GM12878 (cell line): ENCODE measurements at regions of chr5 and their contacts with region 1.

Region 1: DNA sequence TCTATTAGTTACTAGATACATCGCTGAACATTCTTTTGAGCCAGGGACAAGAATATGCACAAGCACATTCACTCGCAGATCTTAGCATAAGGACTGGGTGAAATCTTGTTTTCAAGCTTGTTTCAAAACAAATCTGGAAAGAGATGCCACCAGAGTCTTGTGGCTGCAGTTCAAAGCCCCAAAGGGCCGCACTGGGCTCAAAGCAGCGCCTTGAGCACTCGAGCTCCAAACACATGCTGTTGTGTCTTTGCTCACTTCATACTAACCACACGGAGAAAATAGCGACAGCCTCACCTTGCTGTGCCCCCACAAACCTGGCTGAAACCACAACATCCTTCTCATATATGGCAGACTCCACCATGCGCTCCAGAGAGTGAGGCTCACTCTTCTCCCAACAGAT is 34.2 kb upstream of the IL7R start:
- DNase-seq: no peak
- ATAC-seq: no peak; the same call in 2 of the 3 replicates
- H3K4me3 ChIP-seq: no peak overlapping the region
- H3K27ac ChIP-seq: no peak overlapping the region
- H3K4me1 ChIP-seq: no peaks in the 10 kb centered on the region
- H3K27me3 ChIP-seq: no peaks in the 10 kb centered on the region
- CTCF ChIP-seq: no peak
- EP300 ChIP-seq: no peak
- POLR2A ChIP-seq: no peak
- RAD21 ChIP-seq: no peak

Region 2: GRCh38 chr5:34957857-34958690 is 864.4 kb before region 1 on chr5:
- CTCF ChIA-PET with region 1: no interaction called
- POLR2A ChIA-PET with region 1: no interaction called
- RAD21 ChIA-PET with region 1: no interaction called
- SMC1A ChIA-PET with region 1: no interaction called
- in situ Hi-C with region 1: no loop called
- intact Hi-C with region 1: no loop called
- DNase-seq: no peak
- ATAC-seq: peak; percentile 90
- H3K4me3 ChIP-seq: no peak overlapping the region
- H3K27ac ChIP-seq: no peak overlapping the region
- H3K4me1 ChIP-seq: peaks cover 11% of the 10 kb centered on the region; the same call in 1 of the 2 replicates
- H3K27me3 ChIP-seq: no peaks in the 10 kb centered on the region
- CTCF ChIP-seq: peak; percentile 59 to 72 (median 70)
- EP300 ChIP-seq: no peak
- POLR2A ChIP-seq: no peak
- RAD21 ChIP-seq: peak; percentile 49

Region 3: GRCh38 chr5:35811108-35811741 is 11.3 kb before region 1 on chr5:
- CTCF ChIA-PET with region 1: interaction called, 17 read pairs
- POLR2A ChIA-PET with region 1: no interaction called
- RAD21 ChIA-PET with region 1: interaction called, 5 read pairs
- SMC1A ChIA-PET with region 1: interaction called, 8 read pairs
- in situ Hi-C with region 1: no loop called
- intact Hi-C with region 1: no loop called
- DNase-seq: no peak
- ATAC-seq: peak; percentile 49
- H3K4me3 ChIP-seq: no peak overlapping the region
- H3K27ac ChIP-seq: no peak overlapping the region
- H3K4me1 ChIP-seq: no peaks in the 10 kb centered on the region
- H3K27me3 ChIP-seq: no peaks in the 10 kb centered on the region
- CTCF ChIP-seq: no peak
- EP300 ChIP-seq: no peak
- POLR2A ChIP-seq: no peak
- RAD21 ChIP-seq: no peak

Region 4: DNA sequence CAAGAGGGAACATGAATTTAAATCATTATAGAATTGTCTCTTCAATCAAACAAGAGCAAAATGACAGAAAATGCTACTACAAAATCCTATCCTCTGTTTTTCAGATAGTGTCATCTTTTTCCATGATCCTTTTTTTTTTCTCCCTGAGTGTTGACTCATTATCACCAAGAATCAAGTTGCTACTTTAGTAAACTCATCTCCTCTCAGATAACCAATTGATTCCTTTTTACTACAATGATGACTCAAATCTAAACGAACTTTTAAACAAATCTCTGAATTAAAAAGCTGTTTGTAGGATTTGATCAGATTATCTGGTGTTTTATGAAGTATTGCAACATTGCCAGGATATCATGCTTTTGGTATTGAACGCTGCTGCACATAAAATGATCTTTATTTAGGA is 10.3 kb after region 1 on chr5:
- CTCF ChIA-PET with region 1: interaction called, 12 read pairs
- POLR2A ChIA-PET with region 1: interaction called, 7 read pairs
- RAD21 ChIA-PET with region 1: interaction called, 3 read pairs
- SMC1A ChIA-PET with region 1: interaction called, 6 read pairs
- in situ Hi-C with region 1: no loop called
- intact Hi-C with region 1: no loop called
- DNase-seq: no peak
- ATAC-seq: no peak
- H3K4me3 ChIP-seq: no peak overlapping the region
- H3K27ac ChIP-seq: no peak overlapping the region
- H3K4me1 ChIP-seq: peaks cover 5% of the 10 kb centered on the region; the same call in 1 of the 2 replicates
- H3K27me3 ChIP-seq: no peaks in the 10 kb centered on the region; a peak in 1 of 4 replicates
- CTCF ChIP-seq: no peak
- EP300 ChIP-seq: no peak
- POLR2A ChIP-seq: no peak
- RAD21 ChIP-seq: no peak

Region 5: DNA sequence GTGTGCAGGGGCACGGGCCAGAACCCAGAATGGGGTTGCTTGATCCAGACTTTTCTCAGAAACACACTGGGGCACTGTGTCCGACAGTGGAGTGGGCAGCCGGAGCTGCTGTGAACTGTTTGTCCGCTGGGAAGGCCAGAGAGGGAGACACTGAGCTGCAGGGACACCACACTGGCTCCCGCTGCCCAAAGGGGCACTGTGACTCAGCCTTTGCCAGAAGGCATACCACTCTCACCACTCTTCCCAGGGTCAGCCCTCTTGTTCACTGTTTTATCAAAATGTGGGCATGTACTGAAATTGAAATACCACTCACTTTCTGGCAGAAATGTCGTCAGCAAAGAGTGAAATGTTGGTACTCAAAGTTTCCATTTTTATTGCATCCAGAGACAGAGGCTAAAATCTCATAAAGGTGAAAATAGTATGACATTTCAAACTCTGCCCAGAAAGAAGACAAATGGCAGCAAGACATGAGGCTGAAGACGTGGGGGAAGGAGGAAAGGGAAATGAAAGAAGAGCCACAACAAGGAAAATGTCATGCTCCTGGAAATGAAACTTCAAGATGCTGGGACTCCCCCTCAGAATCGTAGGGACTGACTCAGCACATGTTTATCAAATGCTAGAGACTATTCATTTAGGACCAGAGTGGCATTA is 29.7 kb after region 1 on chr5:
- CTCF ChIA-PET with region 1: interaction called, 6 read pairs
- POLR2A ChIA-PET with region 1: interaction called, 5 read pairs
- RAD21 ChIA-PET with region 1: interaction called, 5 read pairs
- SMC1A ChIA-PET with region 1: interaction called, 29 read pairs
- in situ Hi-C with region 1: no loop called
- intact Hi-C with region 1: no loop called
- DNase-seq: peak; percentile 26
- ATAC-seq: peak; percentile 65
- H3K4me3 ChIP-seq: no peak overlapping the region
- H3K27ac ChIP-seq: no peak overlapping the region
- H3K4me1 ChIP-seq: peaks cover 18% of the 10 kb centered on the region
- H3K27me3 ChIP-seq: no peaks in the 10 kb centered on the region
- CTCF ChIP-seq: peak in 2 of 3 experiments; percentile 3 to 23; a peak in 1 of 6 replicates
- EP300 ChIP-seq: peak; percentile 31 to 41; a peak in 1 of 4 replicates
- POLR2A ChIP-seq: no peak
- RAD21 ChIP-seq: no peak